Heart right ventricle (tissue), 16 donors: ENCODE measurements at regions of chr6 and their contacts with region 1.

Region 1: DNA sequence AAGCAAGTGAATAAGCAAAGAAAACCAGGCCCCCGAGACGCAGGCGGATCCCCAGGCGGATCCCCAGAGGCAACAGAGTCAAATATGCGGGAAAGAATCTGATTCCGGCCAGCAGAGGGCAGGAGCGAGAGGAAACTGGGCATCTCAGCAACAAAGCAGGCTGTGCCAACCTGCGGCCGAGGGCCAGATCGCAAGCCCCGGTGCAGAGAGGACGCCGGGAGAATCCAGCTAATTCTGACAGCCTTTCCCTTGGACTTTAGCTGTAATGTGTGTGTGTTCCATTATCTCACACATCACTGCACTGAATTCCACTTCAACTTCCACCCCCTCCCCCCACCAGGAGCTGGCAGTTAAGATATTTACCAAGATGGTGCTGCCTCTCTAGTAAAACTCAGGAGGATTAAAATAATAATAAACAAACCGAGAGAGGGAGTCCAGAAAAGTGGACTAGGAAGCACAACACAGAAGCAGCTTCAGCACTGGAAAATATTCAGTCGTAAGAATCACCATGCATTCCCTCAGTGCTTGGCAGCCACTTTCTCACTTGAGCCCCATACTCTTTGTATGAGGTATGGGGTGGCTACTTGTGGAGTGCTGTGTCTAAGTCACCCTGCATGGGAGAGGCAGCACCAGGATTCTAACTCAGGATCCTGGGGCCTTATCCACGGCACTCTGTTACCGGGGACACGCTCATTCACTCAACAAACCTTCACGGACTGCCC is 66.2 kb upstream of the SNX9 start:
- DNase-seq: peak; percentile 83 to 90
- ATAC-seq: peak; percentile 85 to 94 (median 90)
- H3K4me3 ChIP-seq: peak overlapping the region in 1 of 10 donors; percentile 2
- H3K27ac ChIP-seq: peak overlapping the region in 3 of 10 donors; percentile 17 to 54 (median 32)
- H3K4me1 ChIP-seq: peaks cover 0 to 46% (median 21%) of the 10 kb centered on the region in 9 donors
- H3K27me3 ChIP-seq: no peaks in the 10 kb centered on the region
- CTCF ChIP-seq: peak; percentile 66 to 90 (median 83)

Region 2: GRCh38 chr6:156348424-156348823 is 1408.4 kb before region 1 on chr6:
- intact Hi-C with region 1: no loop called
- DNase-seq: no peak
- ATAC-seq: peak in 5 of 8 donors; percentile 31 to 52 (median 44)
- H3K4me3 ChIP-seq: no peak overlapping the region
- H3K27ac ChIP-seq: peak overlapping the region in 4 of 10 donors; percentile 5 to 35 (median 31)
- H3K4me1 ChIP-seq: peaks cover 0 to 13% (median 0%) of the 10 kb centered on the region in 9 donors
- H3K27me3 ChIP-seq: peaks cover 0 to 6% (median 0%) of the 10 kb centered on the region in 7 donors
- CTCF ChIP-seq: no peak

Region 3: GRCh38 chr6:157710604-157711003 is 46.3 kb before region 1 on chr6:
- intact Hi-C with region 1: no loop called
- DNase-seq: no peak
- ATAC-seq: no peak
- H3K4me3 ChIP-seq: no peak overlapping the region
- H3K27ac ChIP-seq: no peak overlapping the region
- H3K4me1 ChIP-seq: peaks cover 0 to 35% (median 6%) of the 10 kb centered on the region in 9 donors
- H3K27me3 ChIP-seq: no peaks in the 10 kb centered on the region
- CTCF ChIP-seq: no peak

Region 4: DNA sequence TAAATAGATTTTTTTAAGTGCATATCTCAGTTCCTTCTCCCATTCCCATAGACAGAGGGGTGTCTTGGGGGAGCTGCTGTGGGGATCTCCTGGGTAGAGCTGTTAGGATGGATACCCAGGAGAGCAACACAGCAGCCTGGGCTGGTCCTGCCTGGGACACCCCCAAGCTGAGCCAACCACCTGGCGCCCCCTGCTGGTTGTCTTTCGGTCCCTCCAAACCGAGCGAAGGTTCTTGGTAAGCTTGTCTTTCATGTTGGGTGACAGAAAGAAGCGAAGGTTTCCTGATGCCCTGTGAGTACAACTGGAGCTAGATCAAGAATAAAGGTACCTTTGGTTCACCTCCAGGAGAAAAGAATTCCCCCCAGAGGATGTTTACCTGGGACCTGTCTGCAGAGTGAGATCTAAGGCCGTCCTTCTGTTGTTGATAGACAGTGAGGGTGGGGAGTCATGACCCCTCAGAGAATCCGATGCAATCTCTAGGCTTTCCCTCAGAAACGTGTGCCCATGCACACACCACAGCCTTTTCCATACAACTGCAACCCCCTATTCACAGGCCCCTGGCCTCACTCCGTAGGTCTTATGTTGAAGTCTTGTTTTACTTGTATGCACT is 117.0 kb after region 1 on chr6:
- intact Hi-C with region 1: loop called (anchors 1 to 10 kb)
- DNase-seq: peak; percentile 66 to 82
- ATAC-seq: peak; percentile 62 to 83 (median 72)
- H3K4me3 ChIP-seq: no peak overlapping the region
- H3K27ac ChIP-seq: no peak overlapping the region
- H3K4me1 ChIP-seq: peaks cover 0 to 6% (median 0%) of the 10 kb centered on the region in 9 donors
- H3K27me3 ChIP-seq: no peaks in the 10 kb centered on the region
- CTCF ChIP-seq: peak; percentile 64 to 87 (median 79)

Region 5: GRCh38 chr6:157879873-157880254 is 123.0 kb after region 1 on chr6:
- intact Hi-C with region 1: loop called in 3 of 10 experiments (anchors 2 to 10 kb)
- DNase-seq: no peak
- ATAC-seq: no peak
- H3K4me3 ChIP-seq: no peak overlapping the region
- H3K27ac ChIP-seq: no peak overlapping the region
- H3K4me1 ChIP-seq: peaks cover 0 to 10% (median 3%) of the 10 kb centered on the region in 9 donors
- H3K27me3 ChIP-seq: no peaks in the 10 kb centered on the region
- CTCF ChIP-seq: no peak

Region 6: GRCh38 chr6:158143700-158144099 is 386.8 kb after region 1 on chr6:
- intact Hi-C with region 1: no loop called
- DNase-seq: no peak
- ATAC-seq: no peak
- H3K4me3 ChIP-seq: no peak overlapping the region
- H3K27ac ChIP-seq: no peak overlapping the region
- H3K4me1 ChIP-seq: no peaks in the 10 kb centered on the region
- H3K27me3 ChIP-seq: no peaks in the 10 kb centered on the region
- CTCF ChIP-seq: peak in 1 of 9 donors; percentile 12